Transverse colon (tissue), 4 donors: ENCODE measurements at regions of chr5 and their contacts with region 1.

Region 1: DNA sequence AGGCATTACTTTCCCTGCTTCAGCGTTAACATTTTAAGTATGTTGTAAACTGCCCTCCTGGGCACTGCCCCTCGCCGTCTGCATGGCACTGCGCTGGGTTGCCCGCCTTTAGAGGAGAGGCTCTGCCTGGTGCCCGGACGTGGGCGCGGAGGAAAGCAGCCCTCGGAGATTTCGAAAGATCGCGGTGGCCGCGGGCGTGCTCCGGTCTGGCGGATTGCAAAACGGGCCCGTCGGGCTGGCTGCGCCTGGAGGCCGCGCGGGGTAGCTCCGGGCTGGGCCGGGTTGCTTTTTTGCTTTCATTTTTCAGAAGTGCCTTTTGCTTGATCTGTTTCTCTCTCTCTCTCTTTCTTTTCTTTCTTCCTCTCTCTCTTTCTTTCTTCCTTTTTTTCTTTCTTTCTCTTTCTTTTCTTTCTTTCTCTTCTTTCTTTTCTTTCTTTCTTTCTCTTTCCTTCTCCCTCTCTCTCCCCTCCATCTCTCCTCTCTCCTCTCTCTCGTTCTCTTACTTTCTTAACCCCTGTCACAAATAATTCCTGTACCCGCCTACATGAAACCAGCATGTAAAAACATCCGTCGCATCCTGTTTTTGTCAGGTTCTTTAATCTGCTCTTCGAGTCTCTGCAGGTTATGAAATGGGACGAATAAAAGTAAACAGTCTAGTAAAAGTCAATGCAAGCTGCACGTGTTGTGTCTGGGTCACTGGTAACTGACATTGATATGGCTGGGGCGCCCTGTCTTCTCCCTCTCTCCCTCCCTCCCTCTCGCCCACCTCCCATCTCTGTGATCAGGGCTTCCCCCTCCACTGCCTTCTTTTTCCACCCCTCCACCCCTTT is 1.7 kb downstream of the FST start:
- DNase-seq: peak; percentile 69
- H3K4me3 ChIP-seq: peak overlapping the region; percentile 6 to 82 (median 53)
- H3K27ac ChIP-seq: peak overlapping the region; percentile 30 to 90 (median 80)
- H3K4me1 ChIP-seq: peaks cover 4 to 39% (median 16%) of the 10 kb centered on the region in 4 donors
- H3K27me3 ChIP-seq: peaks cover 55% of the 10 kb centered on the region
- CTCF ChIP-seq: peak; percentile 33 to 62 (median 45)
- EP300 ChIP-seq: no peak
- POLR2A ChIP-seq: no peak

Region 2: DNA sequence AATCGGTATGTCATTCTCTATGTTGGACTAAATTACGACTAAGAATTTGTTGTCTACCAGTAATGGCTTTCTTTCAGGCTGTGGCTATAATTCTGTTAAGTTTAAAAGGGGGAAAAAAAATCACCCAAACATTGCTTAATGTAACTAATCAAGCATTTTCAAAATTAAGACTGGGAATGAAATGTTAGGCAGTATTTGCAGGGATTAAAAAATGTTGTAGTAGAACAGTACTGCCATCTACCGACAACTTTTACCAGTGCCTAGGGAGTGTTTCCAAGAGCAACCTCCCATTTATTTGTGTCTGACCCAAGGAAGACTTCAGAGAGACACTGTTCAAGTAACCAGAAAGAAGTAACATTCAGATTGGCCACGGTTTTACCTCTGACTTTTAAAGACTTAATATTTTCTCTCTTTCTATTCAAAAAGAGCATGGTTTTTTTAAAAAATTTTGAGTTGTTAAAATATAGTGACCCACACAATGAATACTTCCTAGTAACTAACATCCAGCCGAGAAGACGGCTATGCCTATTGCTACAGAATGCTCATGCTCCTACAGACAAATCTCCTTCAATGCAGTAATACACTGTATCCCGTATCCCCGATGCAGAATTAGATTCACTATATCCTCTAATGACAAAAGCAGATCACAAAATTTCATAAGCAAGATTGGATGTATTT is 735.9 kb after region 1 on chr5:
- in situ Hi-C with region 1: loop called in 2 of 4 experiments (anchors 10 kb)
- intact Hi-C with region 1: loop called (anchors 5 kb)
- DNase-seq: no peak
- H3K4me3 ChIP-seq: no peak overlapping the region
- H3K27ac ChIP-seq: peak overlapping the region in 2 of 4 donors; percentile 23 to 78
- H3K4me1 ChIP-seq: peaks cover 0 to 12% (median 0%) of the 10 kb centered on the region in 4 donors
- H3K27me3 ChIP-seq: no peaks in the 10 kb centered on the region
- CTCF ChIP-seq: peak; percentile 71 to 87 (median 77)
- EP300 ChIP-seq: no peak
- POLR2A ChIP-seq: no peak

Region 3: DNA sequence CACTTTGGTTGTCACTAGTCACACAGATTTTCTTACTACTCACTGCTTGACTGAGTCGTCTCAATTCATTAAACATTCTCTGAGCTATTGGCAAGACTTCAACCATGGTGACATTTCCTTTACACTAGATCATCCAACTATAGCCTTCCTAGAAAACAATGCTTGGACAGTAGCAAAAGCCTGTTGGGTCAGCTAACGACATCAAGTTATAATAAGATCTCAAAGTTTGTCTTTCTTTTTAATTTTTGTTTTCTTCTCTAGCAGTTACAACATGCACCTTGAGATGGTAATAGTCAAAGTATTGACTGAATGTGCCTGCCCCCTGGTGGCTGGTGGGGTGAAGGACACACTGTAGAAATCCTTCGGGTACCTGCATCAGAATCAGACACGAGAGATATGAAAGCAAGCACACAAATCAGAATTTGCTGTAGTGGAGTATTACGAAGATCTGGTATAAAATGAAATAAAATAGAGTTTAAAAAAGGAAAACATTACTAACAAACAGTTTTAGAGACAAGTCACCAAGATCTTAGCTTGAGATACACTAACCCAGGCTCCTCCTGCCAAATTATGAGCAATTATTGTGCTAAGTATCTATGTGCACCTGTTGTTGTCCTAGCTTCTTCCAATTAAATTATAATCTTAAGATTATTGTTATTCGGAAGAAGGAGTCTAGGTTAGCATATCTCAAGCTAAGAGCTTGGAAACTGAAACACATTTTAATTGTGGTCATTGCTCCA is 747.1 kb after region 1 on chr5:
- in situ Hi-C with region 1: loop called in 3 of 4 experiments (anchors 10 to 25 kb)
- intact Hi-C with region 1: no loop called
- DNase-seq: peak; percentile 80
- H3K4me3 ChIP-seq: no peak overlapping the region
- H3K27ac ChIP-seq: no peak overlapping the region
- H3K4me1 ChIP-seq: peaks cover 0 to 6% (median 0%) of the 10 kb centered on the region in 4 donors
- H3K27me3 ChIP-seq: no peaks in the 10 kb centered on the region
- CTCF ChIP-seq: peak; percentile 87 to 95 (median 91)
- EP300 ChIP-seq: no peak
- POLR2A ChIP-seq: no peak